Transverse colon (tissue), 4 donors: ENCODE measurements at regions of chr10 and their contacts with region 1.

Region 1: GRCh38 chr10:96176985-96177384 is 46.9 kb downstream of the ZNF518A start:
- DNase-seq: no peak
- H3K4me3 ChIP-seq: no peak overlapping the region
- H3K27ac ChIP-seq: no peak overlapping the region
- H3K4me1 ChIP-seq: no peaks in the 10 kb centered on the region
- H3K27me3 ChIP-seq: no peaks in the 10 kb centered on the region
- CTCF ChIP-seq: no peak
- EP300 ChIP-seq: no peak
- POLR2A ChIP-seq: no peak

Region 2: DNA sequence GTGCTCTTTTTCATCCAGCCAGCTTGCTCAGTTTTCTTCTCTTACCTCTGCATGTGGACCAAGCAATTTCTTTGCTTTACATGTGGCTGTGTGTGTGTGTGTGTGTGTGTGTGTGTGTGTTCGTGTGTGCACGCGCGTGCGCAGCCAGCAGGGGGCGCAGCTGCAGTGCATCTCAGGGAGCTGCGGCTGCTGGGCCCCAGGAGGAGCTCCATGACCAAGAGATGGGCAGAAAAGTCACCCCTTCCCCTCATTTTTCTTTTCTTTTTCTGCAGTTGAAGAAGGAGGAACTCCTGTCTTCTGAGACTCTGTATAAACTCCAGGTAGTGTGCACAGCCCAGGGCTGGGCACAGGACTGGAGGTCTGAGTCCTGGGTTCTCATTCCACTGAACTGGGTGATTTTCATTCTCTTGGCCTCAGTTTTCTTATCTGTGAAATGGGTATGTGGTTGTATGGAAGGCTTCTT is 52.6 kb after region 1 on chr10:
- in situ Hi-C with region 1: no loop called
- intact Hi-C with region 1: no loop called
- DNase-seq: peak; percentile 86
- H3K4me3 ChIP-seq: no peak overlapping the region
- H3K27ac ChIP-seq: peak overlapping the region in 3 of 4 donors; percentile 53 to 70 (median 57)
- H3K4me1 ChIP-seq: peaks cover 0 to 14% (median 6%) of the 10 kb centered on the region in 4 donors
- H3K27me3 ChIP-seq: no peaks in the 10 kb centered on the region
- CTCF ChIP-seq: peak; percentile 78 to 100 (median 83)
- EP300 ChIP-seq: no peak
- POLR2A ChIP-seq: no peak

Region 3: DNA sequence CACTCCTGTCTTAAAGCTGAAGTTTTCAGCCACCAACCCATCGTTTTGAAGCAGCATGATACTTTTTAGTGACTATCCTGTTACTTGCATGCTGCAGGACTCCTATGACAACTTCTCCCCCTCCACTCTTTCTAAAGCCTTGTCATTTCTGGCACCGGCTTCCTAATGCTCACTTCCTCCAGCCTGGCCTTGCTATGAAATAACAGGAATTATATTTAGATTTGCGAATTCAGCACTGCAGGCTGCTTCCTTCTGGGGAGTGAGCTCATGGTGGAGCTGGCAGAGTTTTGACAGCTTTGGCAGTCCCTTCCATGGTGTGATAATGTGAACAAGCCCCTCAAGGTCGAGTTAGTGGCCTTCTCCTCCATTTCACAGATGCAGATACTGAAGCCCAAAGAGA is 81.0 kb after region 1 on chr10:
- in situ Hi-C with region 1: no loop called
- intact Hi-C with region 1: no loop called
- DNase-seq: no peak
- H3K4me3 ChIP-seq: no peak overlapping the region
- H3K27ac ChIP-seq: peak overlapping the region in 1 of 4 donors; percentile 17
- H3K4me1 ChIP-seq: peaks cover 2 to 41% (median 14%) of the 10 kb centered on the region in 4 donors
- H3K27me3 ChIP-seq: no peaks in the 10 kb centered on the region
- CTCF ChIP-seq: no peak
- EP300 ChIP-seq: no peak
- POLR2A ChIP-seq: no peak

Region 4: DNA sequence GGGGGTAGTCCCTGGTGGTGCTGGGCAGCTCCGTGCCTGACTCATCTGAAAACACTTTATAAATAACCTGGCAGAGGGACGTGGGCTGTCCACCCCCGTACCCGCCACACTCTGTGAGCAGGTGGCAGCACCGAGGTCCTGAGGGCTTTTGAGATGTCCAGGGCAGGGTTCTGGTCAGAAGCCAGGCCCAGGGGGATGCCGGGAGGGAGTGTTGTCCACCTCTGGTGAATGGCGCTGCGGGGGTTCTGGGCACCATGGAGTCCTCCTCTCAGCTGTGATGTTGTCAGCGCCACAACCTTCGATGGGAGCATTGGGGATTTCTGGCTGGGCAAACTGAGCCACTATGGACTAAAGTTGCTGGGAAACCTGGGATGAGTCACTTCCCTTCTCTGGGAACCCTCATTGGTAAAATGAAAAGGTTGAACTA is 1645.3 kb after region 1 on chr10:
- in situ Hi-C with region 1: no loop called
- intact Hi-C with region 1: loop called (anchors 5 kb)
- DNase-seq: no peak
- H3K4me3 ChIP-seq: no peak overlapping the region
- H3K27ac ChIP-seq: no peak overlapping the region
- H3K4me1 ChIP-seq: no peaks in the 10 kb centered on the region
- H3K27me3 ChIP-seq: peaks cover 8% of the 10 kb centered on the region
- CTCF ChIP-seq: no peak
- EP300 ChIP-seq: no peak
- POLR2A ChIP-seq: no peak